Ovary (tissue), 10 donors: ENCODE measurements at regions of chr13 and their contacts with region 1.

Region 1: GRCh38 chr13:110499621-110500281 is 61.8 kb downstream of the RAB20 start:
- DNase-seq: no peak
- H3K4me3 ChIP-seq: no peak overlapping the region
- H3K27ac ChIP-seq: no peak overlapping the region
- H3K4me1 ChIP-seq: no peaks in the 10 kb centered on the region
- H3K27me3 ChIP-seq: no peaks in the 10 kb centered on the region
- CTCF ChIP-seq: no peak
- EP300 ChIP-seq: no peak
- POLR2A ChIP-seq: no peak

Region 2: GRCh38 chr13:110463871-110464510 is 35.8 kb before region 1 on chr13:
- intact Hi-C with region 1: loop called in 1 of 4 experiments (anchors 5 kb)
- DNase-seq: no peak
- H3K4me3 ChIP-seq: no peak overlapping the region
- H3K27ac ChIP-seq: no peak overlapping the region
- H3K4me1 ChIP-seq: no peaks in the 10 kb centered on the region
- H3K27me3 ChIP-seq: no peaks in the 10 kb centered on the region
- CTCF ChIP-seq: no peak
- EP300 ChIP-seq: no peak
- POLR2A ChIP-seq: no peak